PC-9 (cell line): ENCODE measurements at regions of chr11 and their contacts with region 1.

Region 1: GRCh38 chr11:77127232-77127911 is 674 bp upstream of the MYO7A start:
- DNase-seq: peak in 1 of 2 experiments; percentile 59
- H3K4me3 ChIP-seq: peak overlapping the region; percentile 44; the same call in 1 of the 2 replicates
- H3K27ac ChIP-seq: no peak overlapping the region
- H3K4me1 ChIP-seq: no peaks in the 10 kb centered on the region
- H3K27me3 ChIP-seq: no peaks in the 10 kb centered on the region
- CTCF ChIP-seq: peak; percentile 98

Region 2: DNA sequence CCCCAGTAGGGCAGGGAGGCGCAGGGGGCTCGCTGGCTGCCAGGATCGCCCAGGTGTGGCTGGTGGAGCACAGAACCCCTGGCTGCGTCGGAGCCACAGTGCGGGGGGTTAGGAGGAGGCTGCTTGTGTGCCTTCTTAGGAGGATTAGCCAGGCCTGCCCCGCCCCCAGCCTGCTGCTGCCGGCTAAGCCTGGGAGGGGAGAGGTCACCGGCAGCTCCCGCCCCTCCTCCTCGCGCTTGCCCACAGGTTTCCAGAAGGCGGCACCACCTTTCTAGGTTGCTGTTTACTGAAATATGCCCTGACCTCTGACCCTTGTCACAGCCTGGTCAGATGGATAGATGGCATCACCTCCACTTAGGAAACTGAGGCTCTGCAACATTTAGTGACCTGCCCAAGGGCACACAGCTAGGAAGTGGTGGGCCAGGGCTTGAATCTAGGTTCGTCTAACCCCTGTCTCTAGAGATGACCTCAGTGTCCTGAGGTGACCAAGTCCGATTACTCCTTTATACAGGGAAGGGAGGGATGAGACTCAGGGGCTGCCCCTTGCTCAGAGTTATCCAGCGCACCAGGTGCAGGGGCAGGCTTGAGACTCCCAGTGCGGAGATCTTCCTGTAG is 44.6 kb after region 1 on chr11:
- CTCF ChIA-PET with region 1: interaction called, 6 read pairs
- POLR2A ChIA-PET with region 1: no interaction called
- intact Hi-C with region 1: loop called (anchors 2 kb)
- DNase-seq: no peak
- H3K4me3 ChIP-seq: no peak overlapping the region
- H3K27ac ChIP-seq: no peak overlapping the region
- H3K4me1 ChIP-seq: peaks cover 8% of the 10 kb centered on the region; the same call in 1 of the 2 replicates
- H3K27me3 ChIP-seq: peaks cover 10% of the 10 kb centered on the region; the same call in 1 of the 2 replicates
- CTCF ChIP-seq: no peak

Region 3: GRCh38 chr11:77619576-77620198 is 492.3 kb after region 1 on chr11:
- CTCF ChIA-PET with region 1: interaction called, 10 read pairs
- POLR2A ChIA-PET with region 1: no interaction called
- intact Hi-C with region 1: loop called (anchors 1 kb)
- DNase-seq: peak; percentile 29 to 56
- H3K4me3 ChIP-seq: no peak overlapping the region
- H3K27ac ChIP-seq: no peak overlapping the region
- H3K4me1 ChIP-seq: no peaks in the 10 kb centered on the region
- H3K27me3 ChIP-seq: no peaks in the 10 kb centered on the region
- CTCF ChIP-seq: peak; percentile 96